ENCODE measurements at regions of chr21 and their contacts with region 1.

Region 1: DNA sequence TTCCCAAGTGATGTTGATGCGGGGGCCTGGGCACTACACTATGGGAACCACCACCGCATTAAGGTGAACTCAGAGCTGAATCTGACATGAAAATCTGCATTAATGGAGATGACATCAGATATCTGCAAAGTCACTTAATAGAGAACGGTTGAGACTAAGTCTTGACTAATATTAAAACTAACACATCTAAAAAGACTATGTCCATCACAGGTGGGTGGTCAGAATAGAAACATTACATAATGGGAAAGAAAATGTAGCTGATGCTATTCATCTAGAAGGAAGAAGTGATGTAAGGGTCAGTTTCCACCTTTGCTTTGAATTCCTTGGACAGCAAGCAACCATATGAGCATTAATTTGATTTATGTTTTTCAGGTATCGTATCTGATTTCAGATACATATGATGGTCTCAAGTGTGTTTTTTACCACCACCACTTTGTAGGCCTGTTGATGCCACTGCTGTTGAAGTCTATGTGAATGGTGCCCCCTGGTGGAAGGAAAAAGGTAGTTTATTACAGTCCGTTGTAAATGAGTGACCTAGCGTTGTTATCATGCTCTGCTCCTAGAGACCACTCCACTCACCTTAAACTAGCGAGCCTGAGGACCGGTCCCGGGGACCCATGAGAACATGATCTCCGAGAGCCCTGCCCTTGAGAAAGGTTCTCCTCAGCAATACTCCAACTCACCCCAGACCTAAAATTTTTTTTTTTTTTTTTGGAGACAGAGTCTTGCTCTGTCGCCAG is 73.5 kb downstream of the BACH1 start:
- DNase-seq: peak; percentile 61
- ATAC-seq: peak; percentile 65
- H3K4me3 Mint-ChIP-seq: no peak overlapping the region
- H3K27ac Mint-ChIP-seq: peak overlapping the region; percentile 38
- H3K4me1 Mint-ChIP-seq: peaks cover 30% of the 10 kb centered on the region
- H3K27me3 Mint-ChIP-seq: no peaks in the 10 kb centered on the region

Region 2: DNA sequence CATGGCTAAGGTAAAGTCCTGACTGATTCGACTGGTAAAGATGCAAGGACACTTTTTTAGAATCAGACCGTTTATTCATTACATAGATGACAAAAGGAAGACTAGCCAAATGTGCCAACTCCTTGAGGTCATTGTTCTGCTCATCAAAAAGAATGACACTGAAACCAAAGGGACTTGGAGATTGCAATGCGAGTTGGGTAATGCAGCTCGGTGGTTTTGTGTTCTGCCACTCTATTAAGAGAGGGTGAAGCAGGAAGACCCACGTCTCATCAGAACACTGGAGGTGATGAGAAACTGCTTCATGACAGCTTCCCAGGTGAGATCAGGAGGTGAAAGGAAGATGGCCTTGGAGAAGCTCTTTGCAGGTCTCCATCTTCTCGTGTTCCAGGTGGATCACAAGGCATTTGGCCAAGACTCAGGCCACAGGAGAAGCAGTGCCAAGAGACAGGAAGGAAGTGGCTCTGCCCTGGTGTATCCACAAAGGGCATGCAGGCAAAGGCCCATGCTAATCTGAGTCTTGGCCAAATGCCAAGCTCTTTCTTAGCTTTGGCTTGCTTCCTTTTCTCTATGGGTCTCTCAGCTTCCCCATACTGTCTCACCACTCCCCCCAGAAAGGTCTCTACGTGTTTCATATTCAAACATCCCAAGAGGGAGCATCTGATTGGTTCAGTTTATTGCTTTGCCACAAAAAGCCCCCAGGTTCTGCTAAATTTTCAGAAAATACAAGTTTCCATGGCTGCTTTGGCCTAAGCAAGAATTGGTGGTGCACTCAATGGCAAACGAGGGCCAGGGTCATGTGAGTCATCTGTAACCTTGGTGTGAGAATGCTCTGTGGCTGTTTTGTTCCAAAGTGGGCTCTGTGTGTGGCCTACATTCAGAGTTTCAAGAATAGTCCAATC is 293.1 kb before region 1 on chr21:
- CTCF ChIA-PET with region 1: interaction called, 10 read pairs
- POLR2A ChIA-PET with region 1: no interaction called
- intact Hi-C with region 1: no loop called
- DNase-seq: peak; percentile 61
- ATAC-seq: peak; percentile 62
- H3K4me3 Mint-ChIP-seq: peak overlapping the region; percentile 80
- H3K27ac Mint-ChIP-seq: peak overlapping the region; percentile 85
- H3K4me1 Mint-ChIP-seq: peaks cover 59% of the 10 kb centered on the region
- H3K27me3 Mint-ChIP-seq: no peaks in the 10 kb centered on the region

Region 3: DNA sequence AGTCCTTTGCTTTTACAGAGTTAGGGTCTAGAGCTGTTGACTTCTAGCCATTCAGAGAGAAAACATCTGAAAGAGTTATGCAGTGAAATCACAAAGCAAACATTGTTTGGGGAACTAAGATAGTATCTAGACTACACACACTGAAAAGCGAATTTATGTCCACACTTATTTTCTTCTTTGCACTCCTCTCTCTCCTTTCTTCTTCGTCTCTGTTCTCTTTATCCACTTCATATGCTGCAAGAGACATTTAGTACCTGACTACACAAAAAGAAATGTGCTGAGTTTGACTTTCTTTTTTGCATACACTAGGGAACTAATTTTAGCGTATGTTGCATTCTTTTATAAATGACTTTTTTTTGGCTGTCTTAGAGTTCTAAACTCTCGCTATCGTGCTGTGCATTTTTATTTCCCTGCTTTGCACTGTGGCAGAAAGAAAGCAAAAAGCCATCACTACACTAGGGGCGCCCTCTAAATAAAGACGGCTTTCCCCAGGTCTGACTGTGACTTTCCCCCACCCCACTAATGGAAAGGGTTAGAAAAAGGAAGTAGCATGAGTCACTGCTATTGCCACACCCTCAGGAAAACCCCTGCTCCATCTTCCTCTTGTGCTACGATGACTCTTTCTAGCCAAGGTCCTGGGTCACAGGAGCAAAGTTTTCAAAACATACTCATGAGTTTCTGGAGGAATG is 176.1 kb before region 1 on chr21:
- CTCF ChIA-PET with region 1: interaction called, 4 read pairs
- POLR2A ChIA-PET with region 1: no interaction called
- intact Hi-C with region 1: loop called in 1 of 2 experiments (anchors 1 kb)
- DNase-seq: peak; percentile 85
- ATAC-seq: peak; percentile 97
- H3K4me3 Mint-ChIP-seq: peak overlapping the region; percentile 64
- H3K27ac Mint-ChIP-seq: peak overlapping the region; percentile 93
- H3K4me1 Mint-ChIP-seq: peaks cover 34% of the 10 kb centered on the region
- H3K27me3 Mint-ChIP-seq: peaks cover 2% of the 10 kb centered on the region

Region 4: GRCh38 chr21:29329406-29329805 is 42.8 kb before region 1 on chr21:
- CTCF ChIA-PET with region 1: no interaction called
- POLR2A ChIA-PET with region 1: no interaction called
- intact Hi-C with region 1: no loop called
- DNase-seq: no peak
- ATAC-seq: no peak
- H3K4me3 Mint-ChIP-seq: no peak overlapping the region
- H3K27ac Mint-ChIP-seq: no peak overlapping the region
- H3K4me1 Mint-ChIP-seq: peaks cover 15% of the 10 kb centered on the region
- H3K27me3 Mint-ChIP-seq: no peaks in the 10 kb centered on the region

Region 5: GRCh38 chr21:29360799-29361765 is 11.2 kb before region 1 on chr21:
- CTCF ChIA-PET with region 1: interaction called, 25 read pairs
- POLR2A ChIA-PET with region 1: no interaction called
- intact Hi-C with region 1: no loop called
- DNase-seq: peak; percentile 28
- ATAC-seq: no peak
- H3K4me3 Mint-ChIP-seq: no peak overlapping the region
- H3K27ac Mint-ChIP-seq: no peak overlapping the region
- H3K4me1 Mint-ChIP-seq: peaks cover 14% of the 10 kb centered on the region
- H3K27me3 Mint-ChIP-seq: no peaks in the 10 kb centered on the region

Region 6: DNA sequence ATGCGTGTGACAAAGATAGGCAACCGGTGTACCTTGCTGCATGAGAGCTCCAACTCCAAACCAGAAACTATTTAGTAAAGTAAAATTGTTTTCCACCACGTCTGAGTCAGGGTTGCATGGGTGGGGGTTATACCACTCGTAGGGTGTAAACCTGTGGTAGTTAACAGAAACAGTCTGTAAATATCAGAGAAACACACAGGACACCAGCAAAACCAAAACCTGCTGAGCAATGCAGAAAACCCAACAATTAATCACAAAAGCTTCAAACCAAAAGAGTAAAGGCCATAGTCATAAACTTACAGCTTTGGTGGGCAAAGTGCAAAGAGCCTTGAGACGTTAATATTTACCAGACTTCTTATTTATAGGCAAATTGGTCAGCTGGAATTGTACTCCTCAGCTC is 209.2 kb after region 1 on chr21:
- CTCF ChIA-PET with region 1: no interaction called
- POLR2A ChIA-PET with region 1: no interaction called
- intact Hi-C with region 1: no loop called
- DNase-seq: peak; percentile 9
- ATAC-seq: peak; percentile 39
- H3K4me3 Mint-ChIP-seq: no peak overlapping the region
- H3K27ac Mint-ChIP-seq: no peak overlapping the region
- H3K4me1 Mint-ChIP-seq: no peaks in the 10 kb centered on the region
- H3K27me3 Mint-ChIP-seq: no peaks in the 10 kb centered on the region